Heart right ventricle (tissue), 16 donors: ENCODE measurements at regions of chr22 and their contacts with region 1.

Region 1: DNA sequence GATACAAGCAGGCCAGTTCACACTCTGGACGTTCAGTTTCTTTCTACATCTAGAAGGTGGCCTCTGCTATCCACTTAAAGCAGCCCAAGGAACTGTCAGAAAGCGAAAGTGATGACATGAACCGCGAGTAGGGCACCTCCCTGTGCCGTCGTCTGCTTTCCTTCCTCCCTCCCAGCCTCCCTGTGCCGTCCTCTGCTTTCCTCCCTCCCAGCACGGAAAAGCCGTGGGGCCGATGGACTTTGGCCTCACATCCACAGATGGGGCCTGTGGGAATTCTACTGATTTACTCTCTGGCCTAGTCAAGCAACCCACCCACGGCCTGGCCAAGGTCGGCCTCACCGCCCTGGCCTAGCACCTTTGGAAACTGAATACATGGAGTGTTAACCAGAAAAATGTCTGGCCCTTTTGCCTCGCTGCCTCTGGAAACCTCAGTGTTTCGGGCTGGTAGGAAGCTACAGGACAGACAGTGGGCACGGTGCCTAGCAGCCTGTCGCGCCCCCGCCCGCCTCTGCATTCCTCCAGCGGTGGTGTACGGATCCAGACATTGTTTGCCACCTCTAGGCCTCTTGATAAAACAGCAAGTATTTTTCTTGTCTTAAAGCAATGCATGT is 14.2 kb downstream of the PEX26 start:
- DNase-seq: peak; percentile 73 to 75
- ATAC-seq: peak; percentile 81 to 89 (median 86)
- H3K4me3 ChIP-seq: peak overlapping the region in 9 of 10 donors; percentile 10 to 50 (median 45)
- H3K27ac ChIP-seq: peak overlapping the region; percentile 80 to 94 (median 90)
- H3K4me1 ChIP-seq: peaks cover 0 to 47% (median 28%) of the 10 kb centered on the region in 9 donors
- H3K27me3 ChIP-seq: no peaks in the 10 kb centered on the region
- CTCF ChIP-seq: peak in 3 of 9 donors; percentile 29 to 43 (median 40)

Region 2: DNA sequence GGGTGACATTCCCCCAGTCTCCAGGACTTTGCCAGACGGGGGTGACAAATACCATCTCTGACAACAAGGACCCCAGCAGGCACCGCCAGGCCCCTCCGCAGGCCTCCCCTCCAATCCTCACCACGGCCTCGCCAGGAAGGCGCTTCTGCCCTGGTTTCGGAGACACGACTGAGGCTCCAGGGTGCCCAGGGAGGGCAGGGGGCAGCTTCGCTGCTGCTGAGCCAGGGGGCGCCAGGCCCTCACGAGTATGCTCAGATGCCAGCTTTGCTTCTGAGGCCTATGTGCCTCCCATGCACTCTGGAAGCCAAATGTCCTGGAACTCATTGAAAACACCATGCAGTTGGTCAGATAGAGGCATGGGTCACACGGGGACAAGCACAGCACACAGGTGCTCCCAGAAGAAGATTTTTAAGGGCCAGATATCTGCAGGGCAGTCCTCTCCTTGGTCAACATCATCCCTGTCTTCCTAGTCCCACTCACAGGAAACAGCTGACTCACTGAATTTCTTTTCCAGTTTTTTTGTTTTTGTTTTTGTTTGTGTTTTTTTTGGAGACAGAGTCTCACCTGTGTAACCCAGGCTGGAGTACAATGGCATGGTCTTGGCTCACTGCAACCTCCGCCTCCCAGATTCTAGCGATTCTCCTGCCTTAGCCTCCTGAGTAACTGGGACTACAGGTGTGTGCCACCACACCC is 337.6 kb before region 1 on chr22:
- intact Hi-C with region 1: loop called in 1 of 10 experiments (anchors 10 kb)
- DNase-seq: no peak
- ATAC-seq: peak in 7 of 8 donors; percentile 30 to 78 (median 64)
- H3K4me3 ChIP-seq: no peak overlapping the region
- H3K27ac ChIP-seq: no peak overlapping the region
- H3K4me1 ChIP-seq: peaks cover 0 to 5% (median 0%) of the 10 kb centered on the region in 9 donors
- H3K27me3 ChIP-seq: no peaks in the 10 kb centered on the region
- CTCF ChIP-seq: peak in 7 of 9 donors; percentile 22 to 45 (median 36)

Region 3: DNA sequence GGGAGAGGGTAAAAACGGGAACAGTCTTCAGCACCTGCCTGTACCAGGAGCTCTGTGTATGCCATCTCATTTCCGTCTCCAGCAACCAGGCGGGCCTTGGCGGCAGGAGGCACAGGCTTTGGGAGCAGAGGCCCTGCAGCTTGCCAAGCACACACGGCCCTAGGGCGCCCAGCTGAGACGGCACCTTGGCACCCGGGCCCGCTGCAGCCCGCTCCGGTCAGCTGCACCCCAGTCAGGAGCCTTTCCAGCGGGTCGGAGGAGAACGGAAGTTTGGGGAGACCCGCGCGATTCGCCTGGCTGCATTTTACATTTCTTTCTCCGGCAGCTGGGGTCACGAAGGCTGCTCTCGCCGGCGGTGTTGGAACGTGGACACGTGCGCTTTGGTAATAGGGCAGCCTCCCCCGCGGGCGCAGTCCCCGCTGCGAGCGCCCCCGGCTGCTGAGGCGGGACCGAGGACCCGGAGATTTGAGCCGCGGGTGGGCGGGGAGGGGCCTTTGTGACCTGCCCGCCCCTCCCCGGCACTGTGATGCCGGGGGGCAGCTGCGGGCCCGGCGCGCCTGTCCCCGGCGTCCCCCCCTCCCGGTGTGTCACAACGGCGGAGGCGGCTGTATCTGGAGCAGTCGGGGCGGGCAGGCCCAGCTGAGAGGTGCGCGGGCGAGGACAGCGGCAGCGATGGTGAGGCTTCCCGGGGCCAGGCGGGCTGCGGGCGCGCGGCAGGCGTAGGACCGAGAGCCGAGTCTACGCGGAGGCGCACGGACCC is 18.4 kb after region 1 on chr22 and contains the start of gene TUBA8:
- intact Hi-C with region 1: loop called in 1 of 10 experiments (anchors 2 kb)
- DNase-seq: peak in 1 of 2 donors; percentile 59
- ATAC-seq: peak; percentile 56 to 79 (median 68)
- H3K4me3 ChIP-seq: peak within 1 kb of the TSS; percentile 39 to 64 (median 56)
- H3K27ac ChIP-seq: peak within 1 kb of the TSS; percentile 76 to 94 (median 90)
- H3K4me1 ChIP-seq: peaks cover 4 to 56% (median 32%) of the 10 kb centered on the region in 9 donors
- H3K27me3 ChIP-seq: peaks cover 0 to 65% (median 5%) of the 10 kb centered on the region in 7 donors
- CTCF ChIP-seq: peak in 1 of 9 donors; percentile 18
- total RNA-seq, gene TUBA8: 71.8 to 183 (median 109) TPM

Region 4: DNA sequence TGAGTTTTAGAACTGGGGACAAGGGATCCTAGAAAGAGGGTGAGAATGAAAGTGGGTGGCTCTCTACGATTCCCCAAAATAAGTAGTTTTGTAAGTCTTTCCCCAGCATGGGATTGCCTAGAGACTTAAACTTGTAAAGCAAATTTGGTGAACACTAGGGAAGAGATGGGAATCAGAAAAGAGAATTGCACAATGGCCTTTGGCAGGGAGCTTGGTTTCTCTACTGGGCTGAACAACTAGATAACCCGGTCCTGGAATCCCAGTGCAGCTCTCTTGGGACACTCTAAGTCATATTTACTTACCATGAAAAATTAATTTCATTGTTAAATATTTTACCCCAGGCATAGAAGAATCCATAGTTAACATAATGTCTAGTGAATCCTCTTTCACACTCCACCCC is 41.4 kb after region 1 on chr22:
- intact Hi-C with region 1: no loop called
- DNase-seq: no peak
- ATAC-seq: peak; percentile 16 to 79 (median 55)
- H3K4me3 ChIP-seq: no peak overlapping the region
- H3K27ac ChIP-seq: peak overlapping the region in 2 of 10 donors; percentile 25 to 30
- H3K4me1 ChIP-seq: peaks cover 0 to 20% (median 18%) of the 10 kb centered on the region in 9 donors
- H3K27me3 ChIP-seq: no peaks in the 10 kb centered on the region
- CTCF ChIP-seq: no peak

Region 5: GRCh38 chr22:18145661-18146388 is 53.8 kb after region 1 on chr22:
- intact Hi-C with region 1: loop called in 2 of 10 experiments (anchors 5 to 10 kb)
- DNase-seq: no peak
- ATAC-seq: no peak
- H3K4me3 ChIP-seq: no peak overlapping the region
- H3K27ac ChIP-seq: no peak overlapping the region
- H3K4me1 ChIP-seq: peaks cover 0 to 31% (median 13%) of the 10 kb centered on the region in 9 donors
- H3K27me3 ChIP-seq: no peaks in the 10 kb centered on the region
- CTCF ChIP-seq: no peak

Region 6: DNA sequence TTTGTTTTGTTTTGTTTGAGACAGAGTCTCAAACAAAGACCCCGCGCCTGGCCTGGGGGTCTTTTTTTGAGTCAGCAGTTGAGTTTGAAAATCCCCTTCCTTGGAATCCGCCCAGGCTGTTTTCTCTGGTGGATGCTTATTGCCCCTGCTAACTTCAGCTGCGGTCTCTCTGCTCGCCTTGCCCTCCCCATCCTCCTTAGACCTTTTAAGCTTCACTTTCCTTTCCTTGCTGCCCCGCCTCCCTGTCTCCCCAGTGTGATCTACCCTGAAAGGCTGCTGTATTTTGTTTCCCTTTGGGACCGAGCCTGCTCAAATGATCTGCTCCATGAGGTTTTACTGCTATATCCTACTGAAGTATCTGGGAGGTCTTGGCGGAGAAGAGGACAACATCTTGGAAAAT is 60.5 kb after region 1 on chr22:
- intact Hi-C with region 1: loop called in 2 of 10 experiments (anchors 5 to 10 kb)
- DNase-seq: no peak
- ATAC-seq: no peak
- H3K4me3 ChIP-seq: no peak overlapping the region
- H3K27ac ChIP-seq: peak overlapping the region in 1 of 10 donors; percentile 30
- H3K4me1 ChIP-seq: peaks cover 4 to 40% (median 23%) of the 10 kb centered on the region in 9 donors
- H3K27me3 ChIP-seq: no peaks in the 10 kb centered on the region
- CTCF ChIP-seq: no peak